Heart left ventricle (tissue), 16 donors: ENCODE measurements at regions of chr2 and their contacts with region 1.

Region 1: DNA sequence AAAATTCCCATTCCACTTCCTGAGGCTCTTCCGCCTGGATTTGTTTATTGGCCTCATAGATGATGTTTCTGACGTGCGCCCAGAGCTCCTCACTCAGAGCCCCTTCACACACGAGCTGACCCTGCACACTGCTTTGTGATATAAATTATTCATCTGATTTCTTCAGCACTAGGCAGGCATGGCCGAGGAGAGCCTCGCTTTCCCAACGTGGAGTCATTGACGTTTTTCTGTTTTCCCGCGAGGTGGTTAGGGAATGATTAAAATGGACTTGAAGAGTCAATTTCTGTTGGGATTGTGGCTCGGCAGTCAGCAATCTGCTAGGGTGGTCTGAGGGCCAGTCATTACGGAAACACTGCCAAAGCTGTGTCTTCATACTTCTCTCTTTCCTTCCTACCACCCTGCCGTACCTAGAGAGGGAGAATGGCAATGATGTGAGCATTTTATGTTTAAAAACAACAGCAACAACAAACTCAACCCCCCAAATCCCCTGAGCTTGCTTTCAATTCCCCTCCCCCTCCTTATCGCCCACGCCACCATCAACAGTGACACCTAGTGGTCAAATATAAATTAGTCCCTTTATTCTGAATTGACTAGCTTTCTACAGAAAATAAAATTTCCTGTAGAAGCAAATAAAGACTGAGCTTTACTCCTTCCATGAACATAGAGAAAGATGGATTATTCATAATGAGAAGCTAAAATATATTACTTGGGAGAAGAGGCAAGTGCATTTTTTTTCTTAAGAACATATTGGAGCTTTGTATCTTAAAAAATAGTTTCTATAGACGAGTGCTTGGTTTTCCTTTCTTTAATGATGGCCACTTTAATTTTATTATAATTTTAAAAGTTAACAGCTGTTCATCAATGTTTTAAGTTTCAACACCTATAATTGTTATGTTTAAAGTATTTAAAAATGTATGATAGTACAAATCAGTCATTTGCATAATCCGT is 285.1 kb downstream of the MTX2 start:
- DNase-seq: peak in 3 of 5 donors; percentile 24 to 32 (median 26)
- ATAC-seq: peak; percentile 25 to 75 (median 66)
- H3K4me3 ChIP-seq: peak overlapping the region in 11 of 12 donors; percentile 28 to 65 (median 52)
- H3K27ac ChIP-seq: peak overlapping the region; percentile 2 to 79 (median 68)
- H3K4me1 ChIP-seq: peaks cover 0 to 22% (median 5%) of the 10 kb centered on the region in 12 donors
- H3K27me3 ChIP-seq: peaks cover 0 to 37% (median 13%) of the 10 kb centered on the region in 9 donors
- CTCF ChIP-seq: peak; percentile 67 to 87 (median 78)
- POLR2A ChIP-seq: no peak

Region 2: DNA sequence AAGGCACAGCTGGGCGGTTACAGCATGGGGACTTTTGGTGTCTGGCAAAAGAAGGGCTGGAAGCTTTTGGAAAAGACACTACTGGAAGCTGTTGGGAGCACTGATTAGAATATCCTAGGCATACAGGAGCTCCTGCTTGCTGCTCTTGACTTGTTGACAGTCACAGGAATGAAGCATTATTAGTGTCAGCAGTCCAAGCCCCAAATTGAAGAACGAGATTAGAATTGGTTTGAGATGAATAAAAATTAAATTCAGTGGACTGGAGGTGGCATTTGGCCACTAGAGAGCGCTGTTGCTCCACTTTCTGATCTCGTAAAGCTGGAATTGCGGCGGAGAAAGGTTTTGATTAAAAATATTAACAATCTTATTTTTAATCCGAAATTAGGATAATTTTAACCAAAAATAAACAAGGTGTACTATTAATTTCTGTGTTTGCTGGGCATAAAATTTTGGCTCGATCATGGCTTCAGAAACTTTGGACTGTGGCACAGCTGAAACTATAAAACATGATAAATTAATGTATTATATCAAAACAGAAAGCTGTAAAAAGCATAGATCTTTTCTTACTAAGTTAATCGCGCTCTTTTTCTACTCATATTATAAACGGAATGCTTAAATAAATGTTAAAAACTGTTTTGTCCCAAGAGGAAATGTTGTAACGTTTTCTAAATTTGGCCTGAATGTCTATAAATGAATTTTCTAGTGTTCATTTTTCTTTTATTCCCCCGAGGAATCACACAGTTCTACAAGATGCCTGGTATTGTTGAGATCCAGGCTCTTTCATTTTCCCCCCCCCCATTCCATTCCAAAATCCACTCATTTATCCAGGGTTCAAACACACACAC is 427.2 kb before region 1 on chr2:
- intact Hi-C with region 1: loop called in 1 of 10 experiments (anchors 5 kb)
- DNase-seq: peak in 3 of 5 donors; percentile 60 to 71 (median 63)
- ATAC-seq: no peak
- H3K4me3 ChIP-seq: no peak overlapping the region
- H3K27ac ChIP-seq: no peak overlapping the region
- H3K4me1 ChIP-seq: peaks cover 4 to 41% (median 22%) of the 10 kb centered on the region in 12 donors
- H3K27me3 ChIP-seq: peaks cover 79 to 100% (median 94%) of the 10 kb centered on the region in 9 donors
- CTCF ChIP-seq: peak; percentile 82 to 97 (median 93)
- POLR2A ChIP-seq: no peak

Region 3: DNA sequence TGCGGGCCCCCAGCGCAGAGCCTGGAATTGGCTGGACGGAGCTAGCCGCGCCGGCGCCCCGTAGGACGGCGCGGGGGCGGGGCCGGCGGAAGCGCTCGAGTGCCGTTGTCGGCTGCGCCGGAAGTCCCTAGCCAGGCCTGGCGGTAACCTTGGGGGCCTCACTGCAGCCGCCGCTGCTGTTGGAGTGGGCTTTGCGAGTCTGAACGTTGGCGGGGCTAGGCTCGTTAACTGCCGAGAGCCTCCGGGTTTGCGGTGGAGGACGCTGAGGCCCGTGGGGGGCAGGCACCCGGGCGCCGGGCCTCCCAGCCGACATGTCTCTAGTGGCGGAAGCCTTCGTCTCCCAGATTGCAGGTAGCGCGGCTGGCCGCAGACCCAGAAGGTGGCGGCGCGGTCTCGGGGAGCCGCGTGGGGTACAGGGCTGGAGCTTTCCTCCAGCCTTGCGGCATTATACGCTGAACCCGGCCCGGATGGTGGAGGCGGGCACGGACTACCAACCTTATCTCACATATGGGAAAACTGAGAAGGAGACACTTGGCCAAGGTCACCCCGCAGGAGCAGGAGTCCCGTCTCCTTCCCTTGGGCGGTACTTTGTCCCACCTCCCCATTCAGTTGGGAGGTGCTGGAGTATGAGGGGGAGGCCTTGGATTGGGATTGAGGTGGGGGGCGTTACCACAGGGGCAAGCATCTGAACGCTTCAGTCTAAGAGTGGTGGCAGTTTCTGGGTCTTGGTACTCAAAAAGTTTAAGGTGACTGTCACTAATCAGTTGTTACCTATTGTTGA is 284.9 kb before region 1 on chr2 and contains the start of gene MTX2:
- intact Hi-C with region 1: loop called in 1 of 10 experiments (anchors 10 kb)
- DNase-seq: peak; percentile 78 to 88 (median 82)
- ATAC-seq: peak; percentile 93 to 100 (median 99)
- H3K4me3 ChIP-seq: peak within 1 kb of the TSS; percentile 59 to 98 (median 94)
- H3K27ac ChIP-seq: peak within 1 kb of the TSS; percentile 79 to 96 (median 92)
- H3K4me1 ChIP-seq: peaks cover 0 to 38% (median 13%) of the 10 kb centered on the region in 12 donors
- H3K27me3 ChIP-seq: no peaks in the 10 kb centered on the region
- CTCF ChIP-seq: peak in 4 of 12 donors; percentile 21 to 36 (median 28)
- POLR2A ChIP-seq: peak in 1 of 2 donors; percentile 67
- total RNA-seq, gene MTX2: 37.6 to 57.8 (median 43.2) TPM

Region 4: GRCh38 chr2:176491172-176491904 is 63.0 kb before region 1 on chr2:
- intact Hi-C with region 1: loop called in 1 of 10 experiments (anchors 2 kb)
- DNase-seq: peak; percentile 53 to 83 (median 72)
- ATAC-seq: peak; percentile 72 to 92 (median 90)
- H3K4me3 ChIP-seq: peak overlapping the region in 1 of 12 donors; percentile 28
- H3K27ac ChIP-seq: peak overlapping the region; percentile 14 to 90 (median 68)
- H3K4me1 ChIP-seq: peaks cover 0 to 60% (median 24%) of the 10 kb centered on the region in 12 donors
- H3K27me3 ChIP-seq: peaks cover 0 to 9% (median 0%) of the 10 kb centered on the region in 9 donors
- CTCF ChIP-seq: no peak
- POLR2A ChIP-seq: no peak

Region 5: GRCh38 chr2:176653479-176654443 is 99.4 kb after region 1 on chr2:
- intact Hi-C with region 1: no loop called
- DNase-seq: peak; percentile 27 to 68 (median 49)
- ATAC-seq: peak; percentile 58 to 93 (median 84)
- H3K4me3 ChIP-seq: no peak overlapping the region
- H3K27ac ChIP-seq: no peak overlapping the region
- H3K4me1 ChIP-seq: peaks cover 0 to 8% (median 0%) of the 10 kb centered on the region in 12 donors
- H3K27me3 ChIP-seq: peaks cover 0 to 29% (median 3%) of the 10 kb centered on the region in 9 donors
- CTCF ChIP-seq: peak; percentile 31 to 74 (median 62)
- POLR2A ChIP-seq: no peak

Region 6: GRCh38 chr2:176814306-176815052 is 260.1 kb after region 1 on chr2:
- intact Hi-C with region 1: loop called in 1 of 10 experiments (anchors 5 kb)
- DNase-seq: no peak
- ATAC-seq: no peak
- H3K4me3 ChIP-seq: no peak overlapping the region
- H3K27ac ChIP-seq: peak overlapping the region in 1 of 12 donors; percentile 9
- H3K4me1 ChIP-seq: peaks cover 0 to 20% (median 3%) of the 10 kb centered on the region in 12 donors
- H3K27me3 ChIP-seq: peaks cover 0 to 14% (median 0%) of the 10 kb centered on the region in 9 donors
- CTCF ChIP-seq: peak; percentile 60 to 79 (median 68)
- POLR2A ChIP-seq: no peak